Dorsolateral prefrontal cortex (tissue), 120 donors: ENCODE measurements at regions of chr14 and their contacts with region 1.

Region 1: GRCh38 chr14:22570132-22570949 is 18.7 kb downstream of the DAD1 start:
- DNase-seq: peak in 5 of 10 donors; percentile 50 to 80 (median 74)
- H3K4me3 ChIP-seq: peak overlapping the region in 3 of 59 donors; percentile 6 to 19 (median 9)
- H3K27ac ChIP-seq: peak overlapping the region in 52 of 59 donors; percentile 2 to 80 (median 66)
- H3K27me3 ChIP-seq: no peaks in the 10 kb centered on the region
- CTCF ChIP-seq: peak; percentile 65 to 96 (median 88)

Region 2: GRCh38 chr14:22143363-22143762 is 427.0 kb before region 1 on chr14:
- intact Hi-C with region 1: no loop called
- DNase-seq: no peak
- H3K4me3 ChIP-seq: no peak overlapping the region
- H3K27ac ChIP-seq: no peak overlapping the region
- H3K27me3 ChIP-seq: peaks cover 0 to 19% (median 0%) of the 10 kb centered on the region in 45 donors
- CTCF ChIP-seq: no peak

Region 3: GRCh38 chr14:22386924-22387775 is 183.2 kb before region 1 on chr14:
- intact Hi-C with region 1: no loop called
- DNase-seq: peak in 8 of 10 donors; percentile 62 to 83 (median 67)
- H3K4me3 ChIP-seq: peak overlapping the region in 54 of 59 donors; percentile 1 to 57 (median 31)
- H3K27ac ChIP-seq: peak overlapping the region in 24 of 59 donors; percentile 4 to 93 (median 68)
- H3K27me3 ChIP-seq: no peaks in the 10 kb centered on the region
- CTCF ChIP-seq: peak; percentile 74 to 98 (median 90)

Region 4: GRCh38 chr14:22653012-22653621 is 82.8 kb after region 1 on chr14:
- intact Hi-C with region 1: loop called in 1 of 2 experiments (anchors 5 kb)
- DNase-seq: peak in 2 of 10 donors; percentile 16 to 33
- H3K4me3 ChIP-seq: no peak overlapping the region
- H3K27ac ChIP-seq: no peak overlapping the region
- H3K27me3 ChIP-seq: no peaks in the 10 kb centered on the region
- CTCF ChIP-seq: peak in 54 of 56 donors; percentile 11 to 69 (median 58)

Region 5: GRCh38 chr14:22715186-22715812 is 145.0 kb after region 1 on chr14:
- intact Hi-C with region 1: loop called in 1 of 2 experiments (anchors 5 kb)
- DNase-seq: no peak
- H3K4me3 ChIP-seq: no peak overlapping the region
- H3K27ac ChIP-seq: no peak overlapping the region
- H3K27me3 ChIP-seq: peaks cover 0 to 25% (median 9%) of the 10 kb centered on the region in 45 donors
- CTCF ChIP-seq: no peak